ENCODE measurements at regions of chr13 and their contacts with region 1.

Region 1: DNA sequence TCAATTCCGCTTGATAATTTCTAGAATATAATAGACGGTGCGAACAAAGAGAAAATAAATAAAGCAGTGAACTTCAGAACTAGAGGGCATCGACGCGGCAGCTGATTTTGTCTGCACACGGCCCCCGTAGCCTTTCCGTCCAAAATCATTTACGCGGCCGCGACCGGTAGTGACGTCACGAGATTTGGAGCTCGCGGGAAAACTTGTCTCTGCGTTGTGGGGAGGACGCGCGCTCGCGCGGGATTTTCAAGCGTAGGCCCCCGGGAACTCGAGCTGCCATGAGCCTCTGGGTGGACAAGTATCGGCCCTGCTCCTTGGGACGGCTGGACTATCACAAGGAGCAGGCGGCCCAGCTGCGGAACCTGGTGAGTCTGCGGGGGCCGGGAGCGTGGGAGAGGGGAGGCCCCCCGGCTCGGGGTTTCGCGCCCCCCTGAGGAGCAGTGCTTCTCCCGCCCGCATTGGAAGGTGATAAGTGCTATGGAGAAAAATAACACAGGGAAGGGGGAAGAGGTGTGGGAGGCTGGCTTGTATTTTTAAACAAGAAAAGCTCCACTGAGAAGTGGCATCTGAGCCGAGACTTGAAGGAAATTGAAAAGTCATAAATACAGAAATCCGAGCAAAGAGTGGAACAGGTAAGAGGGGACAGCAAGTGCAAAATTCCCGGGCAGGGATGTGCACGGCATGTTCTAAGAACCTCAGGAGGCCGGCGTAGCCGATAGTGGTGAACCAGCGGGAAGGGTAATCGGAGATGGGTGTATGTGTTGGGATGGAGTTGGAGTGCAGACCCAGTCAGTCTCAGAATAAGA is at the start of gene RFC3:
- DNase-seq: peak; percentile 78 to 89 (median 87)
- ATAC-seq: peak; percentile 95
- H3K4me3 ChIP-seq: peak within 1 kb of the TSS; percentile 84
- H3K4me3 Mint-ChIP-seq: peak within 1 kb of the TSS; percentile 86 to 100 (median 96)
- H3K27ac ChIP-seq: peak within 1 kb of the TSS; percentile 70
- H3K27ac Mint-ChIP-seq: peak within 1 kb of the TSS; percentile 89 to 98 (median 95)
- H3K4me1 ChIP-seq: peaks cover 0 to 8% of the 10 kb centered on the region in 2 donors
- H3K4me1 Mint-ChIP-seq: peaks cover 14 to 44% (median 25%) of the 10 kb centered on the region in 7 donors
- H3K27me3 ChIP-seq: no peaks in the 10 kb centered on the region
- H3K27me3 Mint-ChIP-seq: peaks cover 0 to 7% (median 0%) of the 10 kb centered on the region in 5 donors
- total RNA-seq, gene RFC3: 4.5 to 29.9 (median 7.1) TPM

Region 2: DNA sequence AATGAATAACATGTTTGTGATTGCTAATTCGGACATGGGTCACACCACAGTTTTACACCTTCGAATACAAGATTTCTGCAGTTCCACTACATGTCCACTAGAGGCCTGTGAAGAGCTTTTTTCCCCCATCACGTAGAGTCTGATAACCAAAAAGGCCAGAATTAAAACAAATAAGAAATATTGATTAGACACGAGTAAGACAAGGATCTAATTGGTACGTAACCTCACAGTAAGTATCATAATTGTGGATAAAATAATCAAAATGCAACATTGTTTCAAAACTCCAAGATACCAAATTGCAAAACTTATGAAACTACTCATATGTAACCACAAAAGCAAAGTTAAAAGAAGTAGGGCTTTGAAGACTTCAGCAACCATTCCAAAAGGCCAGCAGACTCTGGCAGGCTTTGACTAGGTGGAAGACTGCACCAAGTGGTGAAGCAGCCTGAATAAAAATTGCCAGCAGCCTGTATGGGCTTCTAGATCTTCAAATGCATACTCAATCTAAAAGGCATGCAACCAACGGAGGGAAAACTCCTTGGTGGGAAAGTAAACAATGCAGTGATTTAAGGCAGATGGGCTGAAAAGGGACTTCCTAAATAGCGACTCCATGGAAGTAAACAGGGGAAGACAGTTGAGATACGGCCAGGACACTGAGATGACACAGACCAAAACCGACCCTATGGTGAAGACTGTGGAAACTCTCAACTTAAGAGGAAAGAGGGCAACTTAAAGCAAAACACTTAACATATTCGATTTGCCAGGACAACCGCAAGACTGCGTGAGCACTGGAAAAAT is 589.3 kb before region 1 on chr13:
- CTCF ChIA-PET with region 1: no interaction called
- POLR2A ChIA-PET with region 1: no interaction called
- intact Hi-C with region 1: loop called (anchors 1 to 10 kb)
- DNase-seq: peak in 7 of 9 donors; percentile 4 to 49 (median 37)
- ATAC-seq: peak; percentile 75
- H3K4me3 ChIP-seq: no peak overlapping the region
- H3K4me3 Mint-ChIP-seq: no peak overlapping the region
- H3K27ac ChIP-seq: no peak overlapping the region
- H3K27ac Mint-ChIP-seq: peak overlapping the region in 1 of 9 donors; percentile 73
- H3K4me1 ChIP-seq: peaks cover 0 to 4% of the 10 kb centered on the region in 2 donors
- H3K4me1 Mint-ChIP-seq: peaks cover 0 to 8% (median 6%) of the 10 kb centered on the region in 7 donors
- H3K27me3 ChIP-seq: no peaks in the 10 kb centered on the region
- H3K27me3 Mint-ChIP-seq: peaks cover 0 to 5% (median 4%) of the 10 kb centered on the region in 5 donors

Region 3: DNA sequence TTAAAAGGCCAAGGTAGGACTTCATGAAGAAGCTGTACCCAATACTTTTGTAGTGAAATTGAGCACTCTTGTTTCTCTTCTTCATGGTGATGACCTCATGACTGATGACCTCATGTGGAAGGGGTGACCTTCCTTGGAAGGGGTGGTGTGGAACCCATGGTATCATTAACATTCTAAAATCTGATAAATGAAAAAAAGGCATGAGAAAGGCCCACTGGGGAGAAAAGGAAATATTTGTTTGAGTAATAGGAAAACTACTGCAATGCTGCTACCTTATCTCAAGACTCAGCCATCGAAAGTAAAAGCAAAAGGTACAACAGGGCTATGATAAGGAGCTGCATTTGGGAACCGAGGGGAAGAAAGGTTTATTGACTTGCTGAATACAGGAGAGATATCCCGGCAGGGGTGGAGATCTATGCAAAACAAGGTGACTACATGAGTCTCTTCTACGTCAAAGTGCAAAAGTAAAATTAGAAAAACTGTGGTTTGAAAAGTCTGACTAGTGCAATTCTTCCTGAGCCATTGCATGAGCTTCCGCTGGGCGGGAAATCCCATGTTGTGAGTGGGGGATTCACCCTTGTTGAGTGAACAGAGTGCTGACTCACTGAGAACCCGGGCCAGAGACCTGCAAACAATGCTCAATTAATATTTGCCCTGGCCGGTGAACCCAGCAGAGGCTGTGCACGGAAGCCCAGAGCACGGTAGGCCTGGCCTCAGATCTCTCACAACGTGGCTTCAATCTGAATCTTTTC is 139.0 kb before region 1 on chr13:
- CTCF ChIA-PET with region 1: no interaction called
- POLR2A ChIA-PET with region 1: no interaction called
- intact Hi-C with region 1: loop called in 1 of 2 experiments (anchors 2 kb)
- DNase-seq: peak in 1 of 9 donors; percentile 76
- ATAC-seq: peak; percentile 86
- H3K4me3 ChIP-seq: peak overlapping the region; percentile 29
- H3K4me3 Mint-ChIP-seq: peak overlapping the region in 5 of 10 donors; percentile 16 to 64 (median 49)
- H3K27ac ChIP-seq: no peak overlapping the region
- H3K27ac Mint-ChIP-seq: peak overlapping the region in 2 of 9 donors; percentile 76 to 91
- H3K4me1 ChIP-seq: peaks cover 0 to 11% of the 10 kb centered on the region in 2 donors
- H3K4me1 Mint-ChIP-seq: peaks cover 7 to 26% (median 11%) of the 10 kb centered on the region in 7 donors
- H3K27me3 ChIP-seq: no peaks in the 10 kb centered on the region
- H3K27me3 Mint-ChIP-seq: peaks cover 0 to 8% (median 0%) of the 10 kb centered on the region in 5 donors

Region 4: DNA sequence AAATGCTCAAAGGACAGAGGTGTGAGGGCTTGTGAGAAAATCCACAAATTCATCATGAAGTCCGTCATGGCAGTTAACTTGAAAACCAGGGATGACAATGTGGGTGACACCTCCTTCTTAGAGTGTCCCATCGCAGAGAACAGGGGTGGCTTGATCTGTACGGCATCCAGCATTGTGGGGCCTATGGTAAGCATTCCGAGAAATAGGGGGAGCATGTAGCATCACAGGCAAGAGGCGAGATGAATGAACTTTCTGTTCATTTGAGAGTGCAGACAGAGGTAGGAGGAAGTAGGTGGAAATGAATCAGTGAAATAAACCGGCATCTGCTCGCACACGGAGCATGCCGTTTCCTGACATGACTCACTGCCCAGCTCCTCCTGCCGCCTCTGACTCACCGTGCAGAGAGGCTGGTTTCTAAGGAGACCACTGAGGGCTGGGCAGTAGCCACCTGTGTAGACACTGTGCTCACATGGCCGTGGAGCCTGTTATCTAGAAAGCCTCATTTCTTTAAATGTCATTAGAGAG is 338.8 kb after region 1 on chr13:
- CTCF ChIA-PET with region 1: no interaction called
- POLR2A ChIA-PET with region 1: no interaction called
- intact Hi-C with region 1: loop called in 1 of 2 experiments (anchors 1 kb)
- DNase-seq: peak in 1 of 9 donors; percentile 61
- ATAC-seq: peak; percentile 59
- H3K4me3 ChIP-seq: no peak overlapping the region
- H3K4me3 Mint-ChIP-seq: peak overlapping the region in 2 of 10 donors; percentile 33 to 61
- H3K27ac ChIP-seq: no peak overlapping the region
- H3K27ac Mint-ChIP-seq: peak overlapping the region in 1 of 9 donors; percentile 50
- H3K4me1 ChIP-seq: no peaks in the 10 kb centered on the region
- H3K4me1 Mint-ChIP-seq: peaks cover 0 to 23% (median 0%) of the 10 kb centered on the region in 7 donors
- H3K27me3 ChIP-seq: no peaks in the 10 kb centered on the region
- H3K27me3 Mint-ChIP-seq: peaks cover 14 to 29% (median 20%) of the 10 kb centered on the region in 5 donors